Activated naive CD4-positive, alpha-beta T cell treated with anti-CD3 and anti-CD28 coated beads for 36 hours (primary cell): ENCODE measurements at regions of chr12 and their contacts with region 1.

Region 1: DNA sequence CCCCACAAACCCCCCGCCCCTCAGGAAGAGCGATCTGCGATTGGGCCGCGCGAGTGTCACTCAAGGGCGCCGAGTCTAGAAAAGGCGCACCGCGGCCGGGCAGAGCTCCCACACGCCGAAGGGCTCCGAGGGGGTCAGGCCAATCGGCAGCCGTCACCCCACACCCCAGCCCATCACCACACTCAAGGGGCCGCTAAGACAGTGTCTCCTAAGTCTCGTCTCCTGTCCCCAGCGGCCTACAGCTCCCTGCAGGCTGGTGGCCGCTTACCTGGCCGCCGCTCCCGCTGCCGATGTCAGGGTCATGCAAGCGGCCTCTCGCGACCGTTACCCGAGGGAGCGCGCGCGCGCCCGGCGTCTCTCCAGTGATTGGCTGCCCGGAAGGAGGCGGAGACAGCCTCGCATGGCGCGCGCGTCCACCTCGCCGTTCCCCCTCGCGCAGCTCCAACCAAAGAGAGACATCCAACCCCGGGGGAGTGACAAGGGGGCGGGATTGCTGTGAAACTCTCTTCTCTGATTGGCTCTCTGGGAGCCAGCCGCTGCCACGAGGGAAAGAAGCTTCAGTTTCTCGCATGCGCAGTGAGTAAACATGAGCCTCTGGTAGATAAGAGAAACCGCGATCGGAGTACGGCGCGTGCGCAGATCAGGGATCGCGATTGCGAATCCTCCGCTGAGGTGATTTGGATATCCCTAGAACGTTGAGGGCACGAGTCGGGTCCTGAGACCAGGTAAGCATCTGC is at the starts of genes MPHOSPH9 and MTRFR:
- DNase-seq: peak; percentile 100
- H3K4me3 Mint-ChIP-seq: peak within 1 kb of the TSS; percentile 96
- H3K27ac Mint-ChIP-seq: peak within 1 kb of the TSS; percentile 99
- H3K4me1 Mint-ChIP-seq: peaks cover 58% of the 10 kb centered on the region
- H3K27me3 Mint-ChIP-seq: no peaks in the 10 kb centered on the region
- total RNA-seq, gene MPHOSPH9: 111 to 114 TPM
- total RNA-seq, gene MTRFR: 27.7 to 27.8 TPM

Region 2: GRCh38 chr12:122526683-122527477 is 706.1 kb before region 1 on chr12 and contains the starts of genes KNTC1 and RSRC2:
- CTCF ChIA-PET with region 1: no interaction called
- intact Hi-C with region 1: loop called (anchors 5 kb)
- DNase-seq: peak; percentile 100
- H3K4me3 Mint-ChIP-seq: no peak within 1 kb of the TSS
- H3K27ac Mint-ChIP-seq: no peak within 1 kb of the TSS
- H3K4me1 Mint-ChIP-seq: peaks cover 49% of the 10 kb centered on the region
- H3K27me3 Mint-ChIP-seq: no peaks in the 10 kb centered on the region
- total RNA-seq, gene KNTC1: 141 to 142 TPM
- total RNA-seq, gene RSRC2: 117 to 127 TPM

Region 3: DNA sequence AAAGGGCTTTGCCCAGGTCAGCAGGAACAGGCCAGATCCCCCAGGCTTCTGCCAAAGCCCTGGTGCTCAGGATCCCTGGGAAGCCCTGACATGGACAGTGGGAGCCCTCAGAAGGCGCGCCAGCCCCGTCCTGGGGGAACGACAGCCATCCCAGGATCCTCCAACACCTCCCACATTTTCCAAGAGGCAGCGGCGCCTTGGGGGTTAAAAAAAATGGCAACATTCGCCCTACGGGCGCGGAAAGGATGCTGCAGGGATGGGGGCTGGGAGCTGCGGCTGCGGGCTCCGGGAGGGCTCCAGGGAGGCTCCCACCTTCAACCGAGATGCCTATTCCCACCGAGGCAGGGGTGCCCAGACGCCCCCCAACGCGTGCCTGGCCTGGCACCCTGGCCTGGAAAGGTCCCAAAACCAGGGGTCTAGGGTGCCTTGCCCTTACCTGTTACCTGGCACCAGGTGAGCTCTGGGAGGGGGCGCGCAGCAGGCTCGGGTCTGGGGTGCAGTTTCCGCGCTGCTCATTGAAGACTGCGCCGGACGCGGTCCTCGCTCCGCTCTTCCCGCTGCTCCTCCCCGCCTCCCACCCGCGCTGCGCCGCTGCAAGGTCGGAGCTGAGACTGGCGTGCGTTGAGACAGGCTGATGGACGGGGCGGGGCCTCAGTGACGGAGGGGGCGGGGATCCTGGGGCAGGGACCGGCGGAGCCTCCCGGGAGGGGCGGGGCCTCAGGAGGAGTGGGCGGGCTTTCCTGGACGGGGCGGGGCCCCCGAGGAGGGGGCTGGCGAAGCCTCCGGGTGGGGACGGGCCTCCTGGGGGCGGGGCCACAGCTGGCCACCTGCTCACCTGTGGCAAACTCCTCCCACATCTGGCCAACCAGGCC is 266.9 kb before region 1 on chr12 and contains the start of gene ABCB9:
- CTCF ChIA-PET with region 1: interaction called, 5 read pairs
- intact Hi-C with region 1: loop called (anchors 1 kb)
- DNase-seq: peak; percentile 98
- H3K4me3 Mint-ChIP-seq: peak within 1 kb of the TSS; percentile 64
- H3K27ac Mint-ChIP-seq: no peak within 1 kb of the TSS
- H3K4me1 Mint-ChIP-seq: peaks cover 5% of the 10 kb centered on the region
- H3K27me3 Mint-ChIP-seq: no peaks in the 10 kb centered on the region
- total RNA-seq, gene ABCB9: 5.1 to 5.9 TPM

Region 4: DNA sequence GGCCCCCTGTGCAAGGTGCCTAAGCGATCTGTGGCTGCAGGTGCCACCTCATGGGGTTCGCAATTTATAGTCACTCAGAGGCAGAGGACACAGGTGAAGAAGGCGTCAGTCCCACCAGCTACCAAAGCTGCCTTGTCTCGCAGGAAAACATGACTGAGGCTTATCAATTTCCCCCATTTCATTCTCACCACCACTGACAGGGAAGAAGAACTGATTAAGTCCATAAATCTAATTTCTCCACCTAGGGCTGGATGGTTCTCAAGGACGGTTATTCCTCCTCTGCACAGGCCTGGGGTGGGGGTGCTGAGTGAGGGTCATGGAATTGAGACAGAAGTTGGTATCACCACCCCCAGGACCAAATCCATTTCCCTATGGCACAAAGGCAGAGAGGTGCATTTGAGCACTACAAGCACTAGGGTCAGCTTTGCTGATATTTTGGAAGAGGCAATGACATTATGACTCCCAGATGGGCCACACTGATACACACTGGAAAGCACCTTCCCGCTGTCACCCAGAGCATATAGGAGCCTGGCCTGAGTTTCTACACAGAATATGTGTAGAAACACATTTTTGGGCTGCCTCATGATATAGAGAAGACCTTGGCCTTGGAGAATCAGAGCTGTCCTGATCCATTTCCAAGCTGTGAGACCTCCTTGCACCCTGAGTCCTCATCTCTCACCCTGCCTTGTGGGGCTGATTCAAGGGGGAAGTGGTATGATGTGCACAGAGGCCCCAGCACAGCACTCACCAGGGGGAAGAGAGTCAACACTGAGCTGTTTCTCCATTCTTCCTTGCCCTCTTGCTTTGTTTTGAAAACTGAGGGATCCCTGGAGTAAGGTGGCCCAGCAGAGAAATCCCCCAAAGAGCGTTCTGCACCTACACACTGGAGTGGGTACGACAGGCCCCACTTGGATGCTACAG is 141.5 kb before region 1 on chr12:
- CTCF ChIA-PET with region 1: no interaction called
- intact Hi-C with region 1: no loop called
- DNase-seq: no peak
- H3K4me3 Mint-ChIP-seq: no peak overlapping the region
- H3K27ac Mint-ChIP-seq: no peak overlapping the region
- H3K4me1 Mint-ChIP-seq: peaks cover 16% of the 10 kb centered on the region
- H3K27me3 Mint-ChIP-seq: no peaks in the 10 kb centered on the region

Region 5: DNA sequence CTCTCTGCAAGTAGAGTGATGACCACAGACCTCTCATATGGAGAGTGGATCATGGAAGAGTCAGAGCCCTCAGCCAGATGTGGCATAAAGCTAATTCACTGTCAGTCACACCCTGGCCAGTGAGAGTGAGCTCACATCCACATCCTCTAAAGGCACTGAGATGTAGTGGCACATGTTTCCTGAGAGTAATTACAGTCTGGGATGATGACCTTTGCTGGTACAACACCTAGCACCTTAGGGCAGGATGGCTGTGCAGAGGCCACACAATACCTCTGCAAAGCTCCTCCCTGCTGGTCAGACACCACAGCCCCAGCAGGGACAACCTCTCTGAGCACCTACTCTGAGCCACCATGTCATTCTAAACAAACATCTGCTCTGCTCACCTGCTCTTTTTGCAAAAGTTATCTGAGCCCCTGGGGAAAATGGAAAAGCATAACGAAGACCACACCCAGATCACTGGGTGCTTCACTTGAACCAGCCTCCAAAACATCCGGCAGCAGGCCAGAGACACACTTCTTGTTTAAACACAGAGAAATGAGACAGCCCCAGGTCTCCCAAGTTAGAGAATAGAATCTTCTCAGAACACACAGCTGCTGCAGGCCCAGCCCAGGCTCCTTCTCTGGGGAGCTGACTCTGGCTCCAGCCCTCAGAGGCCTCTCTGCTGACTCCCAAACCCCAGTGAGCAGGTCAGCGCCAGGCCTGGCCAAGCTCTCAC is 112.4 kb before region 1 on chr12:
- CTCF ChIA-PET with region 1: no interaction called
- intact Hi-C with region 1: loop called (anchors 1 kb)
- DNase-seq: peak; percentile 75
- H3K4me3 Mint-ChIP-seq: no peak overlapping the region
- H3K27ac Mint-ChIP-seq: peak overlapping the region; percentile 68
- H3K4me1 Mint-ChIP-seq: peaks cover 65% of the 10 kb centered on the region
- H3K27me3 Mint-ChIP-seq: no peaks in the 10 kb centered on the region

Region 6: GRCh38 chr12:123250484-123251383 is 17.8 kb after region 1 on chr12:
- CTCF ChIA-PET with region 1: interaction called, 15 read pairs
- intact Hi-C with region 1: no loop called
- DNase-seq: no peak
- H3K4me3 Mint-ChIP-seq: no peak overlapping the region
- H3K27ac Mint-ChIP-seq: peak overlapping the region; percentile 59
- H3K4me1 Mint-ChIP-seq: peaks cover 73% of the 10 kb centered on the region
- H3K27me3 Mint-ChIP-seq: no peaks in the 10 kb centered on the region

Region 7: GRCh38 chr12:123457980-123458783 is 225.2 kb after region 1 on chr12 and contains the start of gene SNRNP35:
- CTCF ChIA-PET with region 1: no interaction called
- intact Hi-C with region 1: loop called (anchors 2 kb)
- DNase-seq: peak; percentile 83
- H3K4me3 Mint-ChIP-seq: peak within 1 kb of the TSS; percentile 97
- H3K27ac Mint-ChIP-seq: peak within 1 kb of the TSS; percentile 100
- H3K4me1 Mint-ChIP-seq: peaks cover 25% of the 10 kb centered on the region
- H3K27me3 Mint-ChIP-seq: no peaks in the 10 kb centered on the region
- total RNA-seq, gene SNRNP35: 21.5 to 21.8 TPM

Region 8: DNA sequence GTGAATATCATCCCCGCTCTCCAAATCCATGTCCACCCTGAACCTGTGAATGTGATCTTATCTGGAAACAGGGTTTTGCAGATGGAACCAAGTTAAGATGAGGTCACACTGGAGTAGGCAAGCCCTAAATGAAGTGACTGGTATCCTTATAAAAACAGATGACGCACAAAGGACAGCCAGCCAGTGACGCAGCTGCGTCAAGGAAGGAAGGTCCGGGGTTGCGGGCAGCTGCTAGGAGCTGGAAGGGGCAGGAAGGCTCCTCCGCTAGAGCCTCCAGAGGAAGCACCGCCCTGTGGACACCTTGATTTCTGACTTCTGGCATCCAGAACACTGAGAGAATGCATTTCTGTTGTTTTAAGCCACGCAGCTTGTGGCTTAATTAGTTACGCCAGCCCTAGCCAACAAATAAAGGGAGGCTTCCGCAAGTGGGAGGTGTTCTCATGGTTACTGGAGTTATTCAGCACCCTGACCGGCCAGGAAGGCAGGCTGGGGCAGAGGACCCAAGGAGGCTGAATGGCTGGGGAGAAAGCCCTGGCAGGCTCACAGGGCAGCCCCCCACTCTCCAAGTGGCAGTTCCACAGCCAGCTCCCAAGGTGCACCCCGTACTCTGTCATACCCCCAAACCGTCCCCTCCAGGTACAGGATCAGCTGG is 1462.0 kb after region 1 on chr12:
- CTCF ChIA-PET with region 1: no interaction called
- intact Hi-C with region 1: no loop called
- DNase-seq: no peak
- H3K4me3 Mint-ChIP-seq: no peak overlapping the region
- H3K27ac Mint-ChIP-seq: no peak overlapping the region
- H3K4me1 Mint-ChIP-seq: peaks cover 6% of the 10 kb centered on the region
- H3K27me3 Mint-ChIP-seq: no peaks in the 10 kb centered on the region